Mammary epithelial cell (primary cell): ENCODE measurements at regions of chr14 and their contacts with region 1.

Region 1: GRCh38 chr14:56902385-56902784 is 92.1 kb upstream of the OTX2 start:
- DNase-seq: no peak
- H3K4me3 ChIP-seq: no peak overlapping the region
- H3K27ac ChIP-seq: no peak overlapping the region
- H3K4me1 ChIP-seq: no peaks in the 10 kb centered on the region
- H3K27me3 ChIP-seq: peaks cover 2% of the 10 kb centered on the region
- CTCF ChIP-seq: no peak

Region 2: DNA sequence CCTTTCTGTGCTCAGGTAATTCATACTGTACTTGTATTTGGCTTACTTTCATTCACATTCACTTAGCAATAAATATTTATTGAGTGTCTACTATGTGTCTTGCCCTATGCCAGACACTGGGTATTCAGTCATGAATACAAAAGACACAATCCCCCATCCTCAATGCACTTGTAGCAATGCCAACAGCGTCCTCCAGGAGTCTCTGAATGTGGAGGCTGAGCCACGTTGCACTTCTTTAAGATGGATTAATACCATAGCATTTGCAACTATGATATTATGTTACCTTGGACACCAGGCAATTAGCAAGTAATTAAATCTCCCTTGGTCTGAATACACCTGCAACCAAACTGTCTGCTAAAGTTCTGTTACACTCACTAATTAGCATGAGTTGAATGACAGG is 150.9 kb before region 1 on chr14:
- CTCF ChIA-PET with region 1: no interaction called
- dilution Hi-C with region 1: no loop called
- in situ Hi-C with region 1: no loop called
- intact Hi-C with region 1: no loop called
- DNase-seq: no peak
- H3K4me3 ChIP-seq: no peak overlapping the region
- H3K27ac ChIP-seq: no peak overlapping the region
- H3K4me1 ChIP-seq: no peaks in the 10 kb centered on the region
- H3K27me3 ChIP-seq: no peaks in the 10 kb centered on the region
- CTCF ChIP-seq: no peak

Region 3: DNA sequence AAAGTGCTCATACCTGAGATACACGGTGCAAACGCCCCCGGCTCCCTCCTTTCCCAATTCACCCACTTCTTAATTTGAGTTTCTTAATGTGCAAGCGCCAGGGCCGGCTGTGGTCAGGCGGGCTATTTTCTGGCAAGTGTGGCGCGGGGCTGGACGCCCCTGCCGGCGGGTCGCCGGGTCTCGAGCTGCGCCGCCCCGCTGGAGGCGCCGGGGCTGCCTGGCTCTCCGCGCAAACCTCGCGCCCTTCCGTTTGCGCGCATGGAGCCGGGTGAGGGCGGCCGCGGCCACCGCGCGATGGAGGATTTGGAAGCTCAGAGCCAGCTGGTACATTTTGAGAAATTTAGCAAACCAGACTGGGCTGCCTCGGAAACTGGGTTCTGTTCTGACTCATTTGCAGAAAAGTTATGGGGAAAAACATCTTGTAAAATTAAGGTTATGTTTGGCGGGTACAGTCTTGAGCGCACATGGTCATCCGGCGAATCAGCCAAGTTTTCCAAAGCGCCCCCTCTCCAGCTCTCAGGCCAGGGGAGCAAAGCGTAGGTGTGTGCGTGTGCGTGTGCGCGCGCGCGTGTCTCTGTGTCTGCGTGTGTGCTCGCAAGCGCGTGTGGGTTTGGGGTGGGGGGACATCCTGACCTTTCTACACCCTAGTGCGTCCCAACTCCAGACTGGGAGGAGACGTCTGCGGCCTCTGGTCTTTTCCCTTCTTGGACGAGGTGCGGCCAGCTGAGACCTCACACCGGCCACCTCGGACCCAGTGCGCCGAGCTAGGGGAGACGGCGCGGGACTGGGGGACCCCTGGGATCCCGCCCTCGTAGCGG is 85.6 kb before region 1 on chr14:
- CTCF ChIA-PET with region 1: no interaction called
- dilution Hi-C with region 1: loop called (anchors 5 kb)
- in situ Hi-C with region 1: no loop called
- intact Hi-C with region 1: no loop called
- DNase-seq: peak; percentile 16
- H3K4me3 ChIP-seq: no peak overlapping the region
- H3K27ac ChIP-seq: no peak overlapping the region
- H3K4me1 ChIP-seq: no peaks in the 10 kb centered on the region
- H3K27me3 ChIP-seq: peaks cover 49% of the 10 kb centered on the region
- CTCF ChIP-seq: no peak

Region 4: DNA sequence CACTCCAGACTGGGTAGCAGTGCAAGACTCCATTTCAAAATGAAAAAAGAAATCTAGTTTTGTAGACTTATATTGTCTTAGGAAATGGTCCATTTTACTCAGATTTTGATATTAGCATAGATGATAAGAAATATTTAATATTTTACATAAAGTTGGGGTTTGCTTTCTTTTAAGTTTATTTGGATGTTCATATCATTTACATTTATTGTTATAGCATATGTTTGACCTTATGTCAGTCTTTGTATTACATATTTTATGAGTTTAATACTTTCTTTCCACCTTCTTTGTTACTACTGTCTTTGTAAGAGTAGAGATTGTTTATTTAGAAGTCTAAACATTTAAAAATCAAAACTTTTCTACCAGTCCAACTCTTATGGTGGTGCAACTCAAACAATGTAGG is 70.6 kb after region 1 on chr14:
- CTCF ChIA-PET with region 1: no interaction called
- dilution Hi-C with region 1: loop called (anchors 5 kb)
- in situ Hi-C with region 1: no loop called
- intact Hi-C with region 1: no loop called
- DNase-seq: no peak
- H3K4me3 ChIP-seq: no peak overlapping the region
- H3K27ac ChIP-seq: no peak overlapping the region
- H3K4me1 ChIP-seq: no peaks in the 10 kb centered on the region
- H3K27me3 ChIP-seq: no peaks in the 10 kb centered on the region
- CTCF ChIP-seq: no peak